GM13976 (cell line): ENCODE measurements at regions of chr2 and their contacts with region 1.

Region 1: GRCh38 chr2:64228126-64228678 is 84.0 kb upstream of the PELI1 start:
- DNase-seq: peak; percentile 85
- CTCF ChIP-seq: no peak

Region 2: GRCh38 chr2:64143169-64144056 is 84.8 kb before region 1 on chr2:
- in situ Hi-C with region 1: no loop called
- DNase-seq: peak; percentile 28
- CTCF ChIP-seq: no peak

Region 3: DNA sequence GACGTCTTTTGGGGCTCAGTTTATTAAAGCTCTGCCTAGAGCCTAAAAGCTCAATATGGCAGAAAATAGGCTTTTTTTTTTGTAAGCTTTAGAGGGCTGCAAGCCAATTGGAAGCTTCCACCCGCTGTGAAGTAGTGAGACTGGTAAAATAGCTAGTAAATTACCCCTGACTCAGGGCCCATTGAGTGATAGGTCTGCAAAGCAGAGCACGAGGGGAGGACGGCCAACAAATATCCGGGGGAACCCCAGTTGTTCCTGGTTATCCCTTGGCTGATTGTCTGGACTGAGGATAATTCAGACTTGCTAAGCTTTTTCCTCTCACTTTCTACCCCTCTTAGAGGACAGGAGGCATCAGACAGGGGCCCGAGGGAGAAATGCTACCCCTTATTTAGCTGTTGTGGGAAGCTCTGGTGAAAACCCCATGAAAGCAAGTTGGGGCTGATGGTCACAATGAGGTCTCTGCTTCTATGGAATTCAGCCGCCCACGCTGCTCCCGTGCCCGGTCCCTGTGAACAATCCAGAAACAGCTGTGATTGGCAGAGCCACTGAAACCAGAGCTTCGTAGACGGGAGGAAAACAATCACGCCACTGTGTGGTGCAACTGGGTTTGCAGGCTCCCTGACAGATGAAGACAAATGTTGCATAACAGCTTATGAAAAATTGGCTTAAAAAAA is 83.9 kb after region 1 on chr2:
- in situ Hi-C with region 1: loop called (anchors 10 kb)
- DNase-seq: no peak
- CTCF ChIP-seq: no peak

Region 4: GRCh38 chr2:64439194-64439593 is 211.0 kb after region 1 on chr2:
- in situ Hi-C with region 1: no loop called
- DNase-seq: no peak
- CTCF ChIP-seq: no peak